ENCODE measurements at regions of chr2 and their contacts with region 1.

Region 1: GRCh38 chr2:218186355-218186766 is 19.6 kb upstream of the CXCR1 start:
- DNase-seq: peak; percentile 81
- H3K4me3 ChIP-seq: no peak overlapping the region
- H3K27ac ChIP-seq: no peak overlapping the region
- H3K4me1 ChIP-seq: no peaks in the 10 kb centered on the region
- H3K27me3 ChIP-seq: no peaks in the 10 kb centered on the region
- CTCF ChIP-seq: peak; percentile 87

Region 2: GRCh38 chr2:217964275-217965161 is 221.8 kb before region 1 on chr2:
- CTCF ChIA-PET with region 1: no interaction called
- POLR2A ChIA-PET with region 1: no interaction called
- intact Hi-C with region 1: no loop called
- DNase-seq: no peak
- H3K4me3 ChIP-seq: no peak overlapping the region
- H3K27ac ChIP-seq: no peak overlapping the region
- H3K4me1 ChIP-seq: peaks cover 6% of the 10 kb centered on the region
- H3K27me3 ChIP-seq: no peaks in the 10 kb centered on the region
- CTCF ChIP-seq: no peak

Region 3: DNA sequence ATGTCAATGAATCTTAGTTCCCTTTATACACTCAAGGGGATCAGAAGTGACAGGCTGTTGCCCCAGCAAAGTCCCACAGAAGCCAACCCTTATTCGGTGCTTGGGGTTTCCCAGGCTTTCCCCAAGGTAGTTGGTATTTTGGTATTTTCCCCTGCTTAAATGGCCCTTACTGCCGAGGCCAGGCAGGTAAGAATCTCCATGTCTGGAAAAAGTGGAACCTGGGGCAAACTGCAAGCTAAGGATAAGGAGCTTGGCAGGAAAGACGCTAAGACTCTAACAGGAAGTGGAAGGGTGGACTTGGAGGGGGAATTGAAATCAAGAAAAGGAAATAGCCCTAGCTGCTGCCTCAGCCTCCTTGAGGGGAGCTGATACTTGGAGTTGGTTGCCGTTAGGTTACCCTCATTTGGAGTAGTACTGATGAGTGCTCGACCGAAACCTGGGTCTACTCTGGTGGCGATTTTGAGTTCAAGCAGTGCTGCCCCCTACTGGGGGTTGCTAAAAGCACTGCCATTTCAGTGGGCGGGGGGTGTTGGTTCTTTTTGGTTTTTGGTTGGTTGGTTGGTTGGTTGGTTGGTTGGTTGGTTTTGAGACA is 71.1 kb after region 1 on chr2:
- CTCF ChIA-PET with region 1: no interaction called
- POLR2A ChIA-PET with region 1: no interaction called
- intact Hi-C with region 1: loop called (anchors 1 kb)
- DNase-seq: peak; percentile 71
- H3K4me3 ChIP-seq: no peak overlapping the region
- H3K27ac ChIP-seq: no peak overlapping the region
- H3K4me1 ChIP-seq: peaks cover 15% of the 10 kb centered on the region
- H3K27me3 ChIP-seq: no peaks in the 10 kb centered on the region
- CTCF ChIP-seq: peak; percentile 79

Region 4: DNA sequence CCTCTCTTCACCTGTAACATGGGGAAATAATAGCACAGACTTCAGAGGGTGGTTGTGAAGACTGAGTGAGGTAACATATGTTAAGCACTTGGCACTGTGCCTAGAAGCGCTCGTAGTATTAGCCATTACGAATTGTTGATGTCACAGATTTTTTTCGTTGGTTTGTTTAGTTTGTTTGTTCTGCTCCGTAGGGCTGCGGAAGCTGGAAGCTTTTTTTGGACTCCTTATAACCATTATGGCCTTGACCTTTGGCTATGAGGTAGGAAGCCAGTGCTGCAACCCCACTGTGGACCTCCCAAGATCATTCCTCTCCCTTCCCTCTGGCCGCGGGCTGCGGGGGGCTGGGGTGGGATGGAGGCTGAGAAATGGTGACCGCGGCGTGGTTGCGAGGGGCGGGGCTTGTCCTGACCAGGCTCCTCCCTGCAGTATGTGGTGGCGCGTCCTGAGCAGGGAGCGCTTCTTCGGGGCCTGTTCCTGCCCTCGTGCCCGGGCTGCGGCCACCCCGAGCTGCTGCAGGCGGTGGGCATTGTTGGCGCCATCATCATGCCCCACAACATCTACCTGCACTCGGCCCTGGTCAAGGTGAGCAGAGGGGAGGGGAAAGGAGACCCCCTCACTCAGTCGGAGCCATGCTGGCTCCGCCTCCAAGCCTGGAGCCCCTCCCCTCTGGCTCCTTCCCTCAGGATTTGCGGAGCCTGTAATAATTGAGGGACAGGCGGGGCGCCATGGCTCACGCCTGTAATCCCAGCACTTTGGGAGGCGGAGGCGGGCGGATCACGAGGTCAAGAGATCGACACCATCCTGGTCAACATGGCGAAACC is 201.2 kb after region 1 on chr2:
- CTCF ChIA-PET with region 1: no interaction called
- POLR2A ChIA-PET with region 1: no interaction called
- intact Hi-C with region 1: loop called (anchors 5 kb)
- DNase-seq: peak; percentile 62
- H3K4me3 ChIP-seq: peak overlapping the region; percentile 36
- H3K27ac ChIP-seq: no peak overlapping the region
- H3K4me1 ChIP-seq: peaks cover 6% of the 10 kb centered on the region
- H3K27me3 ChIP-seq: no peaks in the 10 kb centered on the region
- CTCF ChIP-seq: no peak